Activated CD4-positive, alpha-beta memory T cell treated with anti-CD3 and anti-CD28 coated beads, Interleukin-2, amount 10 ng/mL, durations not matched to agents 7 days and 5 days (primary cell): ENCODE measurements at regions of chr17 and their contacts with region 1.

Region 1: GRCh38 chr17:41811549-41812380 is at the start of gene P3H4:
- DNase-seq: peak; percentile 79
- H3K4me3 Mint-ChIP-seq: peak within 1 kb of the TSS; percentile 76
- H3K27ac Mint-ChIP-seq: peak within 1 kb of the TSS; percentile 1
- H3K4me1 Mint-ChIP-seq: peaks cover 16% of the 10 kb centered on the region
- H3K27me3 Mint-ChIP-seq: peaks cover 19% of the 10 kb centered on the region
- total RNA-seq, gene P3H4: 1.8 to 1.9 TPM

Region 2: GRCh38 chr17:41738077-41738735 is 73.6 kb before region 1 on chr17:
- CTCF ChIA-PET with region 1: interaction called, 10 read pairs
- POLR2A ChIA-PET with region 1: no interaction called
- DNase-seq: peak; percentile 84
- H3K4me3 Mint-ChIP-seq: no peak overlapping the region
- H3K27ac Mint-ChIP-seq: no peak overlapping the region
- H3K4me1 Mint-ChIP-seq: peaks cover 12% of the 10 kb centered on the region
- H3K27me3 Mint-ChIP-seq: peaks cover 27% of the 10 kb centered on the region

Region 3: GRCh38 chr17:41773190-41773588 is 38.6 kb before region 1 on chr17:
- CTCF ChIA-PET with region 1: no interaction called
- POLR2A ChIA-PET with region 1: no interaction called
- DNase-seq: no peak
- H3K4me3 Mint-ChIP-seq: no peak overlapping the region
- H3K27ac Mint-ChIP-seq: no peak overlapping the region
- H3K4me1 Mint-ChIP-seq: no peaks in the 10 kb centered on the region
- H3K27me3 Mint-ChIP-seq: no peaks in the 10 kb centered on the region

Region 4: GRCh38 chr17:41786227-41787020 is 25.3 kb before region 1 on chr17 and contains the start of gene JUP:
- CTCF ChIA-PET with region 1: interaction called, 14 read pairs
- POLR2A ChIA-PET with region 1: interaction called, 3 read pairs
- DNase-seq: peak; percentile 88
- H3K4me3 Mint-ChIP-seq: peak within 1 kb of the TSS; percentile 44
- H3K27ac Mint-ChIP-seq: no peak within 1 kb of the TSS
- H3K4me1 Mint-ChIP-seq: peaks cover 22% of the 10 kb centered on the region
- H3K27me3 Mint-ChIP-seq: peaks cover 46% of the 10 kb centered on the region
- total RNA-seq, gene JUP: 0.35 to 0.45 TPM

Region 5: GRCh38 chr17:41801374-41802271 is 10.1 kb before region 1 on chr17:
- CTCF ChIA-PET with region 1: interaction called, 23 read pairs
- POLR2A ChIA-PET with region 1: no interaction called
- DNase-seq: peak; percentile 76
- H3K4me3 Mint-ChIP-seq: no peak overlapping the region
- H3K27ac Mint-ChIP-seq: no peak overlapping the region
- H3K4me1 Mint-ChIP-seq: peaks cover 7% of the 10 kb centered on the region
- H3K27me3 Mint-ChIP-seq: no peaks in the 10 kb centered on the region

Region 6: GRCh38 chr17:41824086-41824485 is 12.3 kb after region 1 on chr17:
- CTCF ChIA-PET with region 1: interaction called, 10 read pairs
- POLR2A ChIA-PET with region 1: interaction called, 3 read pairs
- DNase-seq: no peak
- H3K4me3 Mint-ChIP-seq: no peak overlapping the region
- H3K27ac Mint-ChIP-seq: no peak overlapping the region
- H3K4me1 Mint-ChIP-seq: no peaks in the 10 kb centered on the region
- H3K27me3 Mint-ChIP-seq: no peaks in the 10 kb centered on the region